AG04449 (cell line): ENCODE measurements at regions of chr10 and their contacts with region 1.

Region 1: GRCh38 chr10:28991326-28992270 is 297.3 kb upstream of the LYZL1 start:
- DNase-seq: no peak
- H3K4me3 ChIP-seq: no peak overlapping the region
- CTCF ChIP-seq: peak; percentile 48

Region 2: DNA sequence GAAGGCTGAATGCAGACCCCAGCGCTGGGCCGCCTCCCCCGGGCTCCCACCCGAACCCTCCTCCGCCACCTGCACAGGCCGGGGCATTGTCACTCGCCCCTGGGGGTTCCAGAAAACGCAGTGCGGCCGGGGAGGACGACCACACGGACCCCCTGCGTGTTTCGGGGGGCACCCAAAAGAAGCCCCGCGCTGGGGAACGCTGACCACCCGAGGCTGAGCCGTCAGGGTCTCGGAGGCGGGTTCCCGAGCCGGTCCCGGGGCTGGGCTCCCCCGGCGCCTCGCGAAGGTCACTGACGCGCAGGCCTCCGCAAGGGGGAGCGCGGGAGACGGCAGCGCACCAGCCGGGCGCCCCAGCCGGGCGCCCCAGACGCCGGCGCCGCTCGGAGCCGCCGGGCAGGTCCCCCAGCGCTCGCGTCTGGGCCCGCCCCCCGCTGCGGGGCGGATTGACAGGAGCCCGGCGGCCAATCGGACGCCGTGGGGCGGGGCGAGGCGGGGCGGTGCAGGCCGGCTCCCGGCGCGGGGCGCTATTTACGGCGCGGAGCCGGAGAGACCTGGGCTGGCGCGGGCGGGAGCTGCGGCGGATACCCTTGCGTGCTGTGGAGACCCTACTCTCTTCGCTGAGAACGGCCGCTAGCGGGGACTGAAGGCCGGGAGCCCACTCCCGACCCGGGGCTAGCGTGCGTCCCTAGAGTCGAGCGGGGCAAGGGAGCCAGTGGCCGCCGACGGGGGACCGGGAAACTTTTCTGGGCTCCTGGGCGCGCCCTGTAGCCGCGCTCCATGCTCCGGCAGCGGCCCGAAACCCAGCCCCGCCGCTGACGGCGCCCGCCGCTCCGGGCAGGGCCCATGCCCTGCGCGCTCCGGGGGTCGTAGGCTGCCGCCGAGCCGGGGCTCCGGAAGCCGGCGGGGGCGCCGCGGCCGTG is 314.4 kb before region 1 on chr10 and contains the start of gene BAMBI:
- CTCF ChIA-PET with region 1: interaction called, 35 read pairs
- POLR2A ChIA-PET with region 1: interaction called, 3 read pairs
- DNase-seq: no peak
- H3K4me3 ChIP-seq: peak within 1 kb of the TSS; percentile 81
- CTCF ChIP-seq: peak; percentile 79